ENCODE measurements at regions of chr16 and their contacts with region 1.

Region 1: GRCh38 chr16:69150146-69150865 is 17.9 kb downstream of the UTP4 start:
- H3K4me3 Mint-ChIP-seq: no peak overlapping the region
- H3K27ac Mint-ChIP-seq: no peak overlapping the region
- H3K4me1 Mint-ChIP-seq: no peaks in the 10 kb centered on the region
- H3K27me3 Mint-ChIP-seq: no peaks in the 10 kb centered on the region

Region 2: GRCh38 chr16:69171325-69172084 is 21.2 kb after region 1 on chr16:
- intact Hi-C with region 1: no loop called
- H3K4me3 Mint-ChIP-seq: no peak overlapping the region
- H3K27ac Mint-ChIP-seq: peak overlapping the region; percentile 80
- H3K4me1 Mint-ChIP-seq: peaks cover 43% of the 10 kb centered on the region
- H3K27me3 Mint-ChIP-seq: peaks cover 3% of the 10 kb centered on the region

Region 3: DNA sequence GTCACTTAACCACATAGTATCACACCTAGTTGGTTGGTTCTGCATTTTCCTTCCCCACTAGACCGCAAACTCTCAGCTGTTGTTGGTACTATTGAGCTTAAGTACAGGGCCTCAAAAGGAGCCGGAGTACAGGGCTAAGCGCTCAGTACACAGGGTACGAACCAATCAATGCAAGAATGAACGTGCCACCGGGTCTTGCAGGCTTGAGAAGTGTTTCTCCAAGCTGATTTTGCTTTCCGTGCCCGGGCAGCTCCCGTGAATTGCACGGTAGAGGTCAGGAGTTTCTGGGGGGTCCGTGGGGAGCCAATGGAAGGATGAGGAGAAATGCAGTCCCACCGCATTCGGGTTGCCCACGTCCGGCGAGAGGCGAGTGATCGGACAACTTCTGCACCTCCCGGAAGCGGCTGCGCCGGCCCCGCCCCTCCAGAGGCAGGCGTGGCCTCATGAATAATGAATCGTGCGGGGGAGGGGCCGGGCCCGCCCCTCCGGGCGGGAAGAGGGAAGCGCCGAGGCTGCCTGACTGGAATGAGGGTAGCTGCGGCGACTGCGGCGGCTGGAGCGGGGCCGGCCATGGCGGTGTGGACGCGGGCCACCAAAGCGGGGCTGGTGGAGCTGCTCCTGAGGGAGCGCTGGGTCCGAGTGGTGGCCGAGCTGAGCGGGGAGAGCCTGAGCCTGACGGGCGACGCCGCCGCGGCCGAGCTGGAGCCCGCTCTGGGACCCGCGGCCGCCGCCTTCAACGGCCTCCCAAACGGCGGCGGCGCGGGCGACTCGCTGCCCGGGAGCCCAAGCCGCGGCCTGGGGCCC is 36.5 kb after region 1 on chr16 and contains the start of gene SNTB2:
- intact Hi-C with region 1: loop called (anchors 5 kb)
- H3K4me3 Mint-ChIP-seq: peak within 1 kb of the TSS; percentile 90
- H3K27ac Mint-ChIP-seq: peak within 1 kb of the TSS; percentile 91
- H3K4me1 Mint-ChIP-seq: peaks cover 35% of the 10 kb centered on the region
- H3K27me3 Mint-ChIP-seq: peaks cover 46% of the 10 kb centered on the region

Region 4: GRCh38 chr16:69223882-69224281 is 73.6 kb after region 1 on chr16:
- intact Hi-C with region 1: loop called (anchors 10 kb)
- H3K4me3 Mint-ChIP-seq: no peak overlapping the region
- H3K27ac Mint-ChIP-seq: no peak overlapping the region
- H3K4me1 Mint-ChIP-seq: no peaks in the 10 kb centered on the region
- H3K27me3 Mint-ChIP-seq: peaks cover 8% of the 10 kb centered on the region

Region 5: GRCh38 chr16:69286941-69287713 is 136.8 kb after region 1 on chr16:
- intact Hi-C with region 1: loop called (anchors 1 kb)
- H3K4me3 Mint-ChIP-seq: no peak overlapping the region
- H3K27ac Mint-ChIP-seq: no peak overlapping the region
- H3K4me1 Mint-ChIP-seq: no peaks in the 10 kb centered on the region
- H3K27me3 Mint-ChIP-seq: no peaks in the 10 kb centered on the region